Right ventricle myocardium inferior (tissue), 1 donor: ENCODE measurements at regions of chr11 and their contacts with region 1.

Region 1: DNA sequence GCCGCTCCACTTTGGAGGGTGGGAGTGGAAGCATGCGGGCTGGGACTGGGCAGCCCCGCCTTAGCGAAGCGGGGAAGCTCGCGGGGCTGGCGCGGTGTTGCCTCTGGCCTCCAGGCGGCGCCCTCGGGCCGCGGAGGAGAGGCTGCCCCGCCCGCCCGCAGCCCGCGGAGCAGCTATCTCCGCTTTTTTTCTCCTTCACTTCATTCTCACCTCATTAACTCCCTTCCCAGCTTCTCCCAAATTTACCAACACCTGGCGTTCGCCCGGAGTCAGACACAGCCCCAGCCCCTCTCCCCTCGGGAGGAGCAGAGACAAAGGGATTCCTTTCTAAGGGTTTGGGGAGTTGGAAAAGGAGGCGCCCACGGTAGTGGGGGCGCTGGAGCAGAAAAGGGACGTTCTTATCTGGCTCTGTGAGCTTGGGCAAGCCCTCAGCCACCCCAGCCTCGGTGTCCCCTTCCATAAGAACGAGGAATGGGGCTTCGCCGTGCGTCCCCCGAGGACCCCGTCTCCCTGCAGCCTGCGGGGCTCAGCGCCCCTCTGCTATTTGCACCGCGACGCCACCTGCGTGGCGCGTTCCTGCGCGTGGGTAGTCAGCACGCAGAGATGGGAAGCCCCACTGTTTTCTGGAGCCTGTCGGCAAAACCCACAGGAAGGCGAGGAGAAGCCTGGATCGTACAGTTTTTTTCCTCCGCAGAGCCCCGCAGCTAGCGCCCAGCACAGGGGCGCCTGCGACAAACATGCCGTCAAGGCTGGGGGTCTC is 1.5 kb upstream of the WNT11 start:
- DNase-seq: peak; percentile 90
- ATAC-seq: peak; percentile 80

Region 2: GRCh38 chr11:75896843-75897419 is 310.9 kb before region 1 on chr11:
- intact Hi-C with region 1: loop called (anchors 5 kb)
- DNase-seq: no peak
- ATAC-seq: no peak

Region 3: GRCh38 chr11:76235233-76236091 is 27.6 kb after region 1 on chr11:
- intact Hi-C with region 1: loop called (anchors 1 kb)
- DNase-seq: peak; percentile 92
- ATAC-seq: peak; percentile 90

Region 4: GRCh38 chr11:76318744-76319384 is 111.0 kb after region 1 on chr11:
- intact Hi-C with region 1: loop called (anchors 1 kb)
- DNase-seq: peak; percentile 89
- ATAC-seq: peak; percentile 87

Region 5: DNA sequence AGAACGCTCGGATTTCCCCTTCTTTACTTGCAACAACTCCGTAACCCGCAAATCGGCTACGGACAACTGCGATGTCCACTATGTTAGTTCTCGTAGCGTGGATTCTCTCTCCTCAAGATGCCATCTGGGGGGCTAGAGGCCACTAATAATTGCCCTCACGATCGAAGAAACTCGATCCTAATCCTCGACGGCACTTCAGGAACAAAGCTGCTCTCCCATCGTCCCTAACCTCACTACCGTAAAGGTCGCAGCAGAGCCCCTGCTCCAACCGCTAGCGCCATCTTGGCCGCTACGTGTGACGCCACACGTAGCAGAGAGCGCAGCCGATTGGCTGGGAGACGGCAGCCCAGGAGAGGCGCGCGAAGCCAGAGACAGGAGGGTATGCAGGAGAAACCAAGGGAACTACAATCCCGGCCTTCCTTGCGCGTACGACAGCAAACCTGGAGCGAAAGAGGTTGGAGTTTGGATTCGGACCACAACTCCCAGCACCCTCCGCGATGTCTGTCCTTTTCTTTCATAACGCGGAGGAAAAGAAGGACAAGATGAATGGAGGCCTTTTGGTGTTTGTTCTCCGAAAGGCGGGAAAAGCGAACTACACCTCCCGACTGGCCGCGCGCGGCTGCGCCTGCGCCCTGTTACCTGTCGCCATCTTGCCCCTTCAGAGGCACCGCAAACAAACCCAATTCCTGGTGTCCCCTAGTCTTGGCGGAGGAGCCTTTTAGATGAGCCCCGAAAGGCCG is 236.7 kb after region 1 on chr11 and contains the start of gene EMSY:
- intact Hi-C with region 1: loop called (anchors 2 kb)
- DNase-seq: peak; percentile 98
- ATAC-seq: peak; percentile 98
- total RNA-seq, gene EMSY: 17.9 TPM

Region 6: DNA sequence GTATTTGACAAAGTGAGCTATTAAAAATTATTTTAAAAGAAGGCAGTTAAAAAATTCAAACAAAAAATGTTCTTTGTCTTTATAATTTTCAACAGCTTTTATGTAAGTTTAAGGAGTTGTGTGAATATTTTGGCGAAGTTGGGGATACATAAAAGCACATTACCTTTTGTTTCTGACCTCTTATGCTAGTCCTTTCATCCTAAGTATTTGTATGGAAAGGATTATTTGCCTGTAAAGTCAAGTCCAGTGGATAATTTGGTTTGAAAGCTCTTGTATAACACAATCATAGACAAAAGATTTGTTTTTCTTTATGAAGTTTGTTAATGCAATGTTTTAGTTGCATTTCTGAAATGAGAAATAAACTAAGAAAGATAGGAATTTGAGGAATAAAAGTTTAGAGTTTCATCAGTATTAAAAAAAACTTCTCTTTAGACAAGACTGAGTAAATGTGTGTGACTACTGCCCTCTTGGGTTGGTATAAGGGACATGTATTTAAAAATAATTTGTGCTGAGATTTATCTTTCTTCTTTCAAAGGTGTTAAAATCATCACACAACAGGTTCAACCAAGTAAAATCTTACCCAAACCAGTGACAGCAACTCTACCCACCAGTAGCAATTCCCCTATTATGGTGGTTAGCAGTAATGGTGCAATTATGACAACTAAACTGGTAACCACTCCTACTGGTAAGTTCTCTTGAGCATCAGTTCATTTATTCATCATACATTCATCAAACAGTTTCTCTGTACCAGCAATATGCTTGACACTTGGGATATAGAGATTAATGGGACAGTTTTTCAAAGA is 305.2 kb after region 1 on chr11:
- intact Hi-C with region 1: loop called (anchors 5 kb)
- DNase-seq: no peak
- ATAC-seq: no peak

Region 7: GRCh38 chr11:76670485-76671236 is 462.8 kb after region 1 on chr11 and contains the start of gene LRRC32:
- intact Hi-C with region 1: loop called (anchors 10 kb)
- DNase-seq: peak; percentile 84
- ATAC-seq: peak; percentile 48
- total RNA-seq, gene LRRC32: 32.5 TPM